Naive thymus-derived CD4-positive, alpha-beta T cell (primary cell): ENCODE measurements at regions of chr10 and their contacts with region 1.

Region 1: DNA sequence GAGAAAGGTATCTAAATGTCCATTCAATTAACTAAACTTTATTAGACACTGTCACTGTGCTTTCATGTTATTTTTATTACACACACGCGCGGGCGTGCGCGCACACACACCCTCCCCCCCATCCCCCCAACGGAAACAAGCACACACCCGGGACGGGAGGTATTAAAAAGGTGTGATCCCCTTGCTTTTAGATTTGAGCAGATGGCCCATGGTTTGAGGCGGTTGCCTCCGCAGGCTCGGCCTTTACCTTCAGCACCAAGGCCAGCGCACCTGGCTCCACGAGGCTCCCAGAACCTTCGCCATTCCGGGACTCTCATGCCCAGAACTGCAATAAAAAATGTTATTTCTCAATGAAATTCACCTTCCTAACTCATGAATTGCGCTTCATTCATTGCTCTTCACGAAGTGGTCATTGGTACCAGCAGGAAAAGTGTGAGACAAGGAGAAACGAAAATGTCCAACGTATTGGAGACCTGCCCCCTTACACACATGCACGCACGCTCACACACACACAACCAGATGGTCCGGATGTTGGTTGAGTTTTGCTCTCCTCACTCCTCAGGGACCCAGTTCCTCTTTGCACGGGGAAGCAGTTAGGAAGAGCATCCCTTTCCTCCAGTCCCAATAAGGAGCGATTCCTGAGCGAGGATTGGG is 20.8 kb upstream of the PTF1A start:
- DNase-seq: no peak
- ATAC-seq: no peak
- H3K4me3 ChIP-seq: no peak overlapping the region
- H3K4me3 Mint-ChIP-seq: peak overlapping the region in 3 of 10 donors; percentile 9 to 48 (median 16)
- H3K27ac ChIP-seq: no peak overlapping the region
- H3K27ac Mint-ChIP-seq: peak overlapping the region in 1 of 9 donors; percentile 35
- H3K4me1 ChIP-seq: no peaks in the 10 kb centered on the region
- H3K4me1 Mint-ChIP-seq: peaks cover 5 to 19% (median 17%) of the 10 kb centered on the region in 7 donors
- H3K27me3 ChIP-seq: peaks cover 0 to 4% of the 10 kb centered on the region in 2 donors
- H3K27me3 Mint-ChIP-seq: peaks cover 50 to 71% (median 65%) of the 10 kb centered on the region in 5 donors

Region 2: GRCh38 chr10:23192737-23193434 is 21.5 kb after region 1 on chr10:
- CTCF ChIA-PET with region 1: no interaction called
- POLR2A ChIA-PET with region 1: no interaction called
- intact Hi-C with region 1: loop called in 1 of 2 experiments (anchors 2 kb)
- DNase-seq: no peak
- ATAC-seq: no peak
- H3K4me3 ChIP-seq: no peak overlapping the region
- H3K4me3 Mint-ChIP-seq: peak overlapping the region in 1 of 10 donors; percentile 29
- H3K27ac ChIP-seq: no peak overlapping the region
- H3K27ac Mint-ChIP-seq: no peak overlapping the region
- H3K4me1 ChIP-seq: no peaks in the 10 kb centered on the region
- H3K4me1 Mint-ChIP-seq: peaks cover 0 to 11% (median 4%) of the 10 kb centered on the region in 7 donors
- H3K27me3 ChIP-seq: peaks cover 0 to 16% of the 10 kb centered on the region in 2 donors
- H3K27me3 Mint-ChIP-seq: peaks cover 60 to 83% (median 67%) of the 10 kb centered on the region in 5 donors

Region 3: GRCh38 chr10:23199768-23200511 is 28.6 kb after region 1 on chr10:
- CTCF ChIA-PET with region 1: no interaction called
- POLR2A ChIA-PET with region 1: no interaction called
- intact Hi-C with region 1: loop called in 1 of 2 experiments (anchors 5 kb)
- DNase-seq: no peak
- ATAC-seq: no peak
- H3K4me3 ChIP-seq: no peak overlapping the region
- H3K4me3 Mint-ChIP-seq: no peak overlapping the region
- H3K27ac ChIP-seq: no peak overlapping the region
- H3K27ac Mint-ChIP-seq: no peak overlapping the region
- H3K4me1 ChIP-seq: no peaks in the 10 kb centered on the region
- H3K4me1 Mint-ChIP-seq: peaks cover 0 to 13% (median 5%) of the 10 kb centered on the region in 7 donors
- H3K27me3 ChIP-seq: peaks cover 0 to 11% of the 10 kb centered on the region in 2 donors
- H3K27me3 Mint-ChIP-seq: peaks cover 66 to 91% (median 80%) of the 10 kb centered on the region in 5 donors